A549 (cell line): ENCODE measurements at regions of chr10 and their contacts with region 1.

Region 1: DNA sequence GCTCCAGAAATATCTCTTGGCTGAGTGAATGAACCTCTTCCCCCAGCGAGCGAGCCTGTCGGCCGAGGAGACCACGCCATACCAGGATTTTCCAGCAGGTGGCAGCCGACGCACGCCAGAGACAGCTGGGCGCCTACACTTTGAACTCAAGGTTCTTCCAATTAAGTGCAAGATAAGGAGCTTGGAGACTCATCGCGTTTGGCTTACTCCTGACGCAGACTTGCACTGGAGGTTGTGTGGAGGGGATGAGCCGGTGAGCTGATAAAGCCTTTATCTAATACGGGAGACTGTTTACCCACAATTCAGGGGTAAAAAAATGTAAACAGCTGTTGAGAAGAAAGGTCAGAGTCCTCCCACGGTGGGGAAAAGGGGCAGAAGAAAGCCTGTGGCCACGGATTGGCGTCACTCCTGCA is 45.9 kb upstream of the EMX2 start:
- DNase-seq: peak; percentile 70 to 81
- ATAC-seq: peak; percentile 84 to 95
- H3K4me3 ChIP-seq: no peak overlapping the region
- H3K27ac ChIP-seq: no peak overlapping the region
- H3K4me1 ChIP-seq: no peaks in the 10 kb centered on the region
- CTCF ChIP-seq: peak; percentile 92
- EP300 ChIP-seq: no peak
- POLR2A ChIP-seq: no peak
- RAD21 ChIP-seq: peak; percentile 97

Region 2: GRCh38 chr10:116848032-116848943 is 648.3 kb before region 1 on chr10:
- CTCF ChIA-PET with region 1: no interaction called
- POLR2A ChIA-PET with region 1: no interaction called
- DNase-seq: no peak
- ATAC-seq: no peak
- H3K4me3 ChIP-seq: peak overlapping the region; percentile 82
- H3K27ac ChIP-seq: peak overlapping the region; percentile 85 to 94
- H3K4me1 ChIP-seq: peaks cover 14% of the 10 kb centered on the region
- CTCF ChIP-seq: no peak
- EP300 ChIP-seq: no peak
- POLR2A ChIP-seq: no peak
- RAD21 ChIP-seq: no peak

Region 3: GRCh38 chr10:117449636-117450035 is 47.0 kb before region 1 on chr10:
- CTCF ChIA-PET with region 1: interaction called, 10 read pairs
- POLR2A ChIA-PET with region 1: no interaction called
- DNase-seq: peak in 1 of 2 experiments; percentile 30
- ATAC-seq: peak in 1 of 2 experiments; percentile 63; a peak in 3 of 6 replicates
- H3K4me3 ChIP-seq: no peak overlapping the region
- H3K27ac ChIP-seq: no peak overlapping the region
- H3K4me1 ChIP-seq: no peaks in the 10 kb centered on the region
- CTCF ChIP-seq: peak; percentile 29; the same call in 2 of the 3 replicates
- EP300 ChIP-seq: no peak
- POLR2A ChIP-seq: no peak
- RAD21 ChIP-seq: peak; percentile 35 to 43; a peak in 2 of 5 replicates

Region 4: DNA sequence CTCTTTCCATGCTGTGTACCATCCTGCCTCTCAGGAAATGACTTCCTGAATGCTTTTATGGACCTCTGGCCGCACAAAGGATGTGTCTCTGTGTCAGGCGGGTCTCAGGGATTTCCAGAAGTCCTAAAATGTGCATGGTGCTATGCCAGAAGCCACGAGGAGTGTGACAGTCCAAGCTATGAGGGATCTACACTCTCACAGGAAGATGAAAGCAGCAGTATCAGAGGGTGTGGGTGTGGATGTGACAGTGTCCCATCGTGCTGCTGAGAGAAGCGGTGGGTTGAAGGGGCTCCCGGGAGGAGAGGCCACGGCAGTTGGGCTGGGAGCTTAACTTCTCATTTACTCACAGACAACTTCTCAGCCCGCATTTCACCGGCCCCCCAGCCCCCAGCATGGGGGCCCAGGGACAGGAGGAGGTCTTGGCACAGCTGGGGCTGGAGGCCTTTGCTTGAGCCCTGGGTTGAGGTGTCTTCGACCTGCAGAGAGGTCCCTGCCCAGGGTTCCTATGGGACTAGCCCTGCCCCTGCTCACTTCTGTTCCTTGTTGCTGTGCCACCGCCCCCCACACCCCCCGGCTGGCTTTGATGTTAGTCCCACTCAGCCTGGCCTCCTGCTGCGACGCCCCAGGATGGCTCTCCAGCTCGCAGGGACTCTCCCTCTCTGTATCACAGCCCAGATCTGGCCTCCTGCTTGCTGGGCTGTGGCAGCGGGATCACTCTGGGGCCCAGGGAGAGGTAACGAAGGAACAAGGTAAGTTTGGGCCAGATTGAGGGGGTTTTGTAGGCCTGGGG is 15.2 kb after region 1 on chr10:
- CTCF ChIA-PET with region 1: interaction called, 32 read pairs
- POLR2A ChIA-PET with region 1: no interaction called
- DNase-seq: no peak
- ATAC-seq: no peak; a peak in 2 of 6 replicates
- H3K4me3 ChIP-seq: no peak overlapping the region
- H3K27ac ChIP-seq: no peak overlapping the region
- H3K4me1 ChIP-seq: no peaks in the 10 kb centered on the region
- CTCF ChIP-seq: no peak
- EP300 ChIP-seq: no peak
- POLR2A ChIP-seq: no peak
- RAD21 ChIP-seq: no peak

Region 5: DNA sequence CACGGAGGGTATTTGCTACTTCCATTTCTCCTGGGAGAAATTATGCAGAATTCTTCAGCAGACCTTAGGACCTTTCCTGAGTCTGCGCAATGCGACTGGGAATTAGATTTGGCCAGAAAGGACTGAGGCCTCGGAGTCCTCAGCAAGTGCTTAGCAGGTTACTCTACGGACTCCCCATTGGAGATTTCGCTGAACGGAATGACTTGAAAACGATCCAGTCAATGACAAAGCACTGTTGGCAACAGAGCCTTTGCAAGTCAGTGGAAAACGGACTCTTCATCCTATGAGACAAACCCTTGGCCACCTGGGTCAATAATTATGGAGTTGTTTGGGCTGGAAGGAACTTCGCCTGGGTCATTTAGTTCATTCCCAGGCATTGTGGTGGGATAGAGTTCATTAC is 738.1 kb after region 1 on chr10:
- CTCF ChIA-PET with region 1: interaction called, 105 read pairs
- POLR2A ChIA-PET with region 1: no interaction called
- DNase-seq: no peak
- ATAC-seq: no peak
- H3K4me3 ChIP-seq: no peak overlapping the region
- H3K27ac ChIP-seq: no peak overlapping the region
- H3K4me1 ChIP-seq: no peaks in the 10 kb centered on the region
- CTCF ChIP-seq: no peak
- EP300 ChIP-seq: no peak
- POLR2A ChIP-seq: no peak
- RAD21 ChIP-seq: no peak

Region 6: GRCh38 chr10:118423800-118424479 is 927.3 kb after region 1 on chr10:
- CTCF ChIA-PET with region 1: interaction called, 28 read pairs
- POLR2A ChIA-PET with region 1: no interaction called
- DNase-seq: peak; percentile 74 to 91
- ATAC-seq: peak; percentile 99
- H3K4me3 ChIP-seq: no peak overlapping the region
- H3K27ac ChIP-seq: no peak overlapping the region
- H3K4me1 ChIP-seq: no peaks in the 10 kb centered on the region
- CTCF ChIP-seq: peak; percentile 74
- EP300 ChIP-seq: no peak
- POLR2A ChIP-seq: no peak
- RAD21 ChIP-seq: peak; percentile 73 to 75

Region 7: DNA sequence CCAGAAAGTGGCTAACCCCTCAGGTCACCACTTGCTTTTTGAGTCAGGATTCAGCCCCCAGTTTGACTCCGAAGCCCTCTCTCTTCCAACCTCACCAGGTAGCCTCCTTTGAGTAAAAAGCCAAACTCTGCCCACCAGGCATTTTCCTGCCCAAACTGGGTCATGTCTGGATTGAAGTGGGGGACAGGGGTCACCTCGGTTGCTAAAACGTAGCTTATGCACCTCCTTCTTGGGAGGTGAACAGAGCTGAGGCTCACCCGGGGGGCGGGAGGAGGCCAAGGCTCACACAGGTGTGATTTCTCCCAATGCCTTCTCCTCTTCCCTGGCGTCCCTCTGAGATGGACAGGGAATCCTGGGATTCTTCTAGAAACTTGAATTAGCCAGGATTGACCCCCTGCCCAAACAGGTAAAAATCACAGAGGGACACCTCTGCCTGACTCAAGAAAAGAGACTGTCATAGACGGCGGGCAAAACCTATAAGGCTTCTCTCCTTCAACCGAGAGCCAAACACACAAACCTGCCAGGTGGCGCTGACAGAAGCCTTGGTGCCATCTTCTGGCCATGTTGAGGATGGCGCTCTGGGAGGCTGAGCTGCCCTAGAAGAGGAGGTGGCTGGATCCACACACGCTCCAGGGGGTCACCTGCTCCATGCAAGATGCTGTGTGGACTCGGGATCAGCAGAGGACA is 1047.2 kb after region 1 on chr10:
- CTCF ChIA-PET with region 1: interaction called, 11 read pairs
- POLR2A ChIA-PET with region 1: no interaction called
- DNase-seq: peak; percentile 57 to 69
- ATAC-seq: peak; percentile 94 to 98
- H3K4me3 ChIP-seq: no peak overlapping the region
- H3K27ac ChIP-seq: no peak overlapping the region
- H3K4me1 ChIP-seq: no peaks in the 10 kb centered on the region
- CTCF ChIP-seq: peak; percentile 63
- EP300 ChIP-seq: no peak
- POLR2A ChIP-seq: no peak
- RAD21 ChIP-seq: peak; percentile 63 to 70